ENCODE measurements at regions of chr12 and their contacts with region 1.

Region 1: DNA sequence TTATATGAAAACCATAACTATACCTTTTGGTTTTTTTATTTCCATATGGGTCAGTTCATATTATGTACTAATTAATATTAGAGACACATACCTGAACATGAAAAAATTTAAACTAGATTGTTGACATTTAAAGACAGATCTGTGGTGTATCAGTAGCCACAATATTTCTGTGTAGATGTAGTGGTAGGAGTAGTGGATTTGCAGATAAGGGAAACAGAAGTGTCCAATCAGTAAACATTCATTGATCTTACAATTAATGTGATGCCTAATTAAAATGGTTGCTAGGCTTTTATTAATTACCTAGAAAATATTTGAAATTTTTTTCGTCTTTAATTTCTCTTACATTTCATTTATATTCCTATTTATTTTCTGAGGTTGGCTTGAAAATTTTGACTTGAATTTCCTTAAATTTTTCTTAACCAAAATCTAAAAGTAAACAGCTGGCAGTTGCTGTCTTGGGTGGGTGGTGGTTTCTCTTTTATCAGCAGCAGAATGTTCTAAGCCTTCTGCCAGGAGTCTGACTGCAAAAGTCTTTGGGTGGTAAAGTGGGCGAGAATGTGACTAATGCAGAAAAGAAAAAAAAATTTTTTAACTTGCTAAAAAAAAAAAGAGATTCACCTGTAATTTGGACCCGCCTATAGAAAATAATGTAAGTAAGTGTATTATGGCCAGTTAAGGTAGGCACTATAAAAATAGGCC is 2.4 kb downstream of the FGFR1OP2 start:
- DNase-seq: no peak
- H3K4me3 ChIP-seq: no peak overlapping the region
- H3K27ac ChIP-seq: peak overlapping the region in 1 of 3 donors; percentile 12
- H3K4me1 ChIP-seq: peaks cover 40% of the 10 kb centered on the region in 2 donors
- H3K27me3 ChIP-seq: no peaks in the 10 kb centered on the region
- CTCF ChIP-seq: no peak
- POLR2A ChIP-seq: no peak

Region 2: DNA sequence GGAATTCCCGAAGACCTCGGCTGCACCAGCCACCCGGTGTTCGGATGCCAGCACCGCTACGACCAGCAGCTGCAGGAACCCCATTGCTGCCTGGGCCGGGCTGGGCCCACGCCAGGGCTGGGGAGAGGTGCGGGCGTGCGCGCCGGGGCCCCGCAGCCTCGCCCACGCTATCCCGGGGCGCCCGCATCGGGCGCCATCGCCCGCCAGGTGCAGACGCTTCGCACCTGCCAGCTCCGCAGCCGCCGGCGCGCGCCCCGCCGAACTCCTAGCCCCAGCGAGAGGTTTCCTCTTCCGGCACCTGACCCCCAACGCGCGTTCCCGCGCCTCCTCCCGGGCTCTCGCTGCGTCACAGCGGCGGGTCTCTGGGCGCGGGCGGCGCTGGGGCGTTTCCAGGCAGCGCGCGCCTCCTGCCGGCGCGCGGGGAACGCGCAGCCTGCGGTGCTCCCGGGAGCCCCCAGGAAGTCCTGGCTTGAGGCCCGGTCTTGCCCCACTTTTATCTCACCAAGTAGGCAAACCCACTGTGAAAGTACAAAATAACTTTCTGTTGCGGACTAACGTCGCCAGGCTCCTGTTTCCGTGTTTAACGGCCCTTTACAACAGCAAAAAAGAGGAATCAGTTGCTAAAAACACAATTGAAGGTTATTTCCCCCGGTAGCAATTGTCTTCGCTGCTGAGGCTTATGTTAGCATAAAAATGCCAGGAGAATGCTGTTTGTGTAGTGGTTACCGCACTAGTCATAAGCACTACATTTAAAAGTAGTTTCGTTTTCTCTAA is 73.6 kb after region 1 on chr12 and contains the start of gene TM7SF3:
- intact Hi-C with region 1: loop called (anchors 5 kb)
- DNase-seq: peak; percentile 93 to 97
- H3K4me3 ChIP-seq: peak within 1 kb of the TSS; percentile 68 to 78 (median 76)
- H3K27ac ChIP-seq: peak within 1 kb of the TSS; percentile 90 to 98 (median 93)
- H3K4me1 ChIP-seq: peaks cover 17 to 24% of the 10 kb centered on the region in 2 donors
- H3K27me3 ChIP-seq: no peaks in the 10 kb centered on the region
- CTCF ChIP-seq: peak; percentile 63 to 98 (median 92)
- POLR2A ChIP-seq: peak in 1 of 2 donors; percentile 84
- total RNA-seq, gene TM7SF3: 69.7 to 213 (median 76.8) TPM

Region 3: GRCh38 chr12:27048822-27049752 is 108.4 kb after region 1 on chr12:
- intact Hi-C with region 1: no loop called
- DNase-seq: no peak
- H3K4me3 ChIP-seq: no peak overlapping the region
- H3K27ac ChIP-seq: no peak overlapping the region
- H3K4me1 ChIP-seq: no peaks in the 10 kb centered on the region
- H3K27me3 ChIP-seq: no peaks in the 10 kb centered on the region
- CTCF ChIP-seq: no peak
- POLR2A ChIP-seq: no peak